ENCODE measurements at regions of chr3 and their contacts with region 1.

Region 1: GRCh38 chr3:151282921-151283320 is 4.6 kb upstream of the P2RY14 start:
- DNase-seq: no peak

Region 2: GRCh38 chr3:151168269-151169094 is 114.4 kb before region 1 on chr3:
- intact Hi-C with region 1: loop called (anchors 1 to 5 kb)
- DNase-seq: peak; percentile 95

Region 3: DNA sequence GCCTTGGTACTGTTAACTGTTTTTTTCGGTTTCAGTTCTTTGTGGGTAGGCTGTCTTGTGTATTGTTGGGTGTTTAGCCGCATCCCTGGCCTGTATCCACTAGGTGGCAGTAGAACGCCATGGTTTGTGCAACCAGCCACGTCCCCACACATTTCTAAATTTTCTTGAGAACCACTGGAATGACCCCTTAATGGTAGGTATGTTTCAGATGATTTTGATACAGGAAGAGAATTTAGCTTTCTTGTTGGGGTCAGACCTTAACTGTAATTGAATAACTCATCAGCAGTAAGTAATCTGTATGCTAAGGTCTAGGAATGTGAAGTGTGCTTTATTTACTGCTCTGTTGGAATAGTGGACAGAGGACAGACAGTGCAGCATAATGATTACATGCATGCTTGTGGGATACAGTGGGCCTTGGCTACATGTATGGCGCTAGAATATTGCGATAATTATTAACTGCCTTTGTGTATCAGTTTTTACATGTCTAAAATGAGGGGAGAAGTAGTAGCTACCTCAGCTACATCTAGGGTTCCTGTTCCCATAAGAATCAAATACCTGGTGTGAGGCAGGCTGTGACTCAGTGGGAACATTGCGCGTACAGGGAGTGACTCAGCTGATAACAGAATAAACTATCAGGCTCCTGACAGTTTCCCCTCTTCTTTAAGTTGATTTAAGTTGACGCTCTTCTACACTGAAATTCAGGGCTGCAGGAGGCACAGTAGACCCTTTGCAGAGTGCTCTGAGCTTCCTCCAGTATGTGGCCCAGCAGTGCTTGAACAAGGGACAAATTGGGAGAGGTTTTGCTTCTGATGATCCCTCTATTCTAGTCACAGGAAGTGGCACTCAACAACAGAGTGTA is 54.9 kb before region 1 on chr3:
- intact Hi-C with region 1: loop called (anchors 2 to 5 kb)
- DNase-seq: peak; percentile 91

Region 4: DNA sequence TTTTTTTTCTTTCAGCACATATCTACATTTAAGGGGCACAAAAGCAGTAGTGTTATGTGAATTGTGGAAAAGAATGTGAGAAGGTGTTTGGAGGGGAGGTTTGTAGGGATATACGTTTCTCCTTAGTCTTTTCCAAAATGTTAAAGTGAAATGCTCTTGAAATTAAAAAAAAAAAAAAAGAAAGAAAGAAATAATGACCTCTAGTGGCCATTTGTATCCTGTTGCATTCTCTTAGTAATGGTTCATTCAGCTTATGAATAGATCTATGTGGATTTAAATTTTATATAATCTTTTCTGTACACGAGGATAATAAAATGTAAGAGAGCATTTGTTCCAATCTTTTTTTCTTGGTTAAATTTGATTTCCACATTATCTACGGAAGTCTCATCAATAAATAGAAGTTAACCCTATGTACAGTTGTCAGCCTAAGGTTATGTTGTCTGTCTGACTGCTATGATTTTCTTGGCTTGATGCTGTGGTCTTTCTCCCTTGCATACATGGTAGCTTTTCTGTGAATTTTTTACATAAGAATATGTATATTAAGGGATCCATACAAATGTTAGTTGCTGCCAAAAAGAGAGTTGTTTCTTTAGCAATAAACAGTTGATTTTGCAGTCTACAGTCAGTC is 44.8 kb after region 1 on chr3:
- intact Hi-C with region 1: no loop called
- DNase-seq: no peak

Region 5: GRCh38 chr3:151864423-151865101 is 581.6 kb after region 1 on chr3:
- intact Hi-C with region 1: no loop called
- DNase-seq: no peak